GM13977 (cell line): ENCODE measurements at regions of chr1 and their contacts with region 1.

Region 1: DNA sequence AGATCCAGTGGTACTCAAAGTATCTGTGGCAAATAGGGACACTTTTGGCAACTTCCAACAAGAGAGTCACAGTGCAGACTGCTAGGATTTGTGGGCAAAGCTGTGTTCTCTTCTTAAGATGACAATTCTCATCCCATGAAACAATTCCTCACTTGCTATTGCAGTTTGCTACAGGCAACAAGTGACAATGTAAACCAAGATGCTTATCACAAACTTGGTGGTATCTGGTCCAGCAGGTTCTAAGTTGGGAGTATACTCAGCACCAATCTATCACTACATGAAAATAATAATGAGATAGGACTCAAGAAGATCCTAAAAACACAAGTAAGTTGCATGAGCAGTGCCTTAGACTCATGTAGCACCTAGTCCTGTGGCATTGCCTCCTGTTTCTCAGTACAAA is 3.4 kb upstream of the OVAAL start:
- DNase-seq: no peak
- CTCF ChIP-seq: no peak

Region 2: GRCh38 chr1:180365039-180365438 is 190.4 kb before region 1 on chr1:
- in situ Hi-C with region 1: no loop called
- DNase-seq: no peak
- CTCF ChIP-seq: peak; percentile 22

Region 3: DNA sequence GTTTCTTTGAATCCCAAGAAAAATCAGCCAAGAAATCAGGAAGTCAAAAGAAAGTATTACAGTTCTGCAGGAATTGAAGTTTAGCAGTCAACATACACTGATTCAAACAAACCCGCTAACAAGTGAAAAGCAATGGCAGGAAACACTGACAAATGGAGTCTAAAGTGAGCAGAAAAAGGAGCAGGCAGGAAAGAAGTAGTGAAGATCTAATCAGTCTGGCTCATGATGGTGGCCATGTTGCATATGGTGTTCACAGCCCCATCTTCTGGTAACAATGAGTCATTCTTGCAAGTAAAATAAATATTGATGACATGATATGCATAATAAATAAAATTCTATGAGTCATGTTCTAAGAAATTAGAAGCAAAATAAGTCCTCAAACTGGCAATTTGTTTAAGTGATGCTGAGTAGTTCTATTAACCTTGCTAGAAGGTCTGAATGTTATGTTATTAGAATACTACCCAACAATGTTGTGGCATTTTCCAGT is 47.5 kb before region 1 on chr1:
- in situ Hi-C with region 1: loop called (anchors 5 kb)
- DNase-seq: peak; percentile 24
- CTCF ChIP-seq: peak; percentile 15